Uterus (tissue), 4 donors: ENCODE measurements at regions of chr9 and their contacts with region 1.

Region 1: DNA sequence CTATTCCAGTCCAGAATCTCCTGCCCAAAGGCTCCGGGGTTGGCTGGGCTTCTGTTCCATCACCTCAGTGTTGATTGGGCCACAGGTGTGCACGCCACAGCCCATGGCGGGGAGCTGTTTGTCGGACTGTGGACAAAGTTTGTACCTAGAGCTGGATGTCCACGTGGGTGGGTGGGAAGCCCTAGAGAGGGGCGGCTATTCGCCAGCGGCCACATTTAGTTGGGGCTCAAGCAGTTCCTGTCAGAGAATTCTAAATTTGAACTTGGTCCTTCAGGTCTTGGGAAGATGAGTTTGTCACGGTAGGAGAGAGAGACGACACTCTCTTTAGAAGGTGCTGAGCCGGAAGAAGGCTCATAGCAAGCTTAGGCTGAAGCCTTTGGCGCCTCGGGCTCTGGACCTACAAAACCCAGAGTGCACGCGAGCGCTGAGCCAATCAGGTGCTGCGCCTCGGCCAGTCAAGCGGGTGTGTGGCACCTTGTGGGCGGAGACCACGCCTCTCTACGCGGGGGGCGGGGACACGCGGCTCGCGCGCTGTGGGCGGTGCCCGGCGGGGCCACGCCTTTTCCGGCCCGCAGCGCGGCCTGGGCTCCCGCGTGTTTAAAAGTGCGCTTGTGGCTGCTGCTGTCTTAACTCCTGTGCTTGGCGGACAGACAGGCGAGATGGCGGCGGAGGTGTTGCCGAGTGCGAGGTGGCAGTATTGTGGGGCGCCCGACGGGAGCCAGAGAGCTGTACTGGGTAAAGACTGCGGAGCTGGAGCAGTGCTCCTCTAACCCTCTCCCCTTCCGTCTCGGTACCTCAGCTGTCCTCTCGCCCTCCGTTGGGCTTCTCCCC is at the start of gene POLR1E:
- DNase-seq: peak; percentile 92 to 93
- H3K4me3 ChIP-seq: peak within 1 kb of the TSS; percentile 69 to 91
- H3K27ac ChIP-seq: peak within 1 kb of the TSS; percentile 83 to 92
- H3K4me1 ChIP-seq: peaks cover 0 to 7% of the 10 kb centered on the region in 2 donors
- H3K27me3 ChIP-seq: no peaks in the 10 kb centered on the region
- CTCF ChIP-seq: no peak
- POLR2A ChIP-seq: peak; percentile 81 to 86
- total RNA-seq, gene POLR1E: 13.2 to 42.7 (median 35.8) TPM

Region 2: GRCh38 chr9:37415011-37415719 is 70.4 kb before region 1 on chr9:
- intact Hi-C with region 1: loop called (anchors 10 kb)
- DNase-seq: peak; percentile 62 to 65
- H3K4me3 ChIP-seq: no peak overlapping the region
- H3K27ac ChIP-seq: peak overlapping the region; percentile 26 to 38
- H3K4me1 ChIP-seq: no peaks in the 10 kb centered on the region
- H3K27me3 ChIP-seq: no peaks in the 10 kb centered on the region
- CTCF ChIP-seq: peak; percentile 70 to 77 (median 73)
- POLR2A ChIP-seq: no peak